ENCODE measurements at regions of chr9 and their contacts with region 1.

Region 1: GRCh38 chr9:86126998-86127972 is 27.9 kb upstream of the GOLM1 start:
- DNase-seq: peak; percentile 97 to 99
- H3K4me3 ChIP-seq: peak overlapping the region; percentile 30; the same call in 1 of the 2 replicates
- H3K27ac ChIP-seq: peak overlapping the region; percentile 87
- H3K4me1 ChIP-seq: peaks cover 46% of the 10 kb centered on the region
- H3K27me3 ChIP-seq: no peaks in the 10 kb centered on the region
- CTCF ChIP-seq: no peak

Region 2: GRCh38 chr9:85290019-85290418 is 837.3 kb before region 1 on chr9:
- CTCF ChIA-PET with region 1: no interaction called
- POLR2A ChIA-PET with region 1: no interaction called
- intact Hi-C with region 1: no loop called
- DNase-seq: no peak
- H3K4me3 ChIP-seq: no peak overlapping the region
- H3K27ac ChIP-seq: no peak overlapping the region
- H3K4me1 ChIP-seq: no peaks in the 10 kb centered on the region
- H3K27me3 ChIP-seq: peaks cover 35% of the 10 kb centered on the region
- CTCF ChIP-seq: no peak

Region 3: GRCh38 chr9:86079865-86080469 is 47.3 kb before region 1 on chr9:
- CTCF ChIA-PET with region 1: no interaction called
- POLR2A ChIA-PET with region 1: no interaction called
- intact Hi-C with region 1: loop called (anchors 1 kb)
- DNase-seq: peak in 1 of 2 experiments; percentile 49
- H3K4me3 ChIP-seq: peak overlapping the region; percentile 32; the same call in 1 of the 2 replicates
- H3K27ac ChIP-seq: peak overlapping the region; percentile 95
- H3K4me1 ChIP-seq: peaks cover 29% of the 10 kb centered on the region
- H3K27me3 ChIP-seq: no peaks in the 10 kb centered on the region
- CTCF ChIP-seq: no peak

Region 4: GRCh38 chr9:86163503-86163902 is 36.2 kb after region 1 on chr9:
- CTCF ChIA-PET with region 1: interaction called, 16 read pairs
- POLR2A ChIA-PET with region 1: no interaction called
- intact Hi-C with region 1: no loop called
- DNase-seq: no peak
- H3K4me3 ChIP-seq: no peak overlapping the region
- H3K27ac ChIP-seq: no peak overlapping the region
- H3K4me1 ChIP-seq: no peaks in the 10 kb centered on the region
- H3K27me3 ChIP-seq: no peaks in the 10 kb centered on the region
- CTCF ChIP-seq: no peak

Measured in PC-9 (cell line).